CD4-positive, alpha-beta T cell (primary cell): ENCODE measurements at regions of chr10 and their contacts with region 1.

Region 1: DNA sequence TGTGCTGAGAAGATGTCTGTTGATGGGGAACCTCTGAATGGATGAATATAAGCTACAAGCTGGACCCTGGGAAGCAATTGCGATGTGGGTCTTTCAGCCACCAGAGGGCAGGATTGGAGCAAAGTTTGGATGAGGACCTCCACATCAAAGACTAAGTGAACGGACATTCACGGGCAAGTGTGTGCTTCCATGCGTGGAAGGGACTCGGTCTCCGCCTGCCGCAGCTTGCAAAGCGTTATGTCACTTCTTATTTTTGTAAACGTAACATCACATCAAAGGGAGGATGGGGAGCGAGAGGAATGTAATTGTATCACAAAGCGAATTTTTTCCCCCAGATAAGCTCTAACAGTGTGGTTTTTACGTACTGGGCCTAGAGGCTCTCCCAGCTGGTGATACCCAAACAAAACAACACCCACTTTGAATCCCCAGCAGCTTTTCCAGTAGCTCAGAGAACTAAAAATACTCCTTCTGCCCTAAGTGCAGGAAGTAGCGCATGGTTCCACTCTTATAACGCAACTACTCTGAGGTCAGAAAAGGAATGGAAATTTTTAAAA is 65.0 kb downstream of the VWA2 start:
- DNase-seq: peak; percentile 28 to 78 (median 58)
- ATAC-seq: peak; percentile 24
- H3K4me3 ChIP-seq: peak overlapping the region; percentile 78
- H3K4me3 Mint-ChIP-seq: peak overlapping the region; percentile 86
- H3K27ac ChIP-seq: no peak overlapping the region
- H3K27ac Mint-ChIP-seq: peak overlapping the region; percentile 5
- H3K4me1 ChIP-seq: peaks cover 13% of the 10 kb centered on the region
- H3K4me1 Mint-ChIP-seq: peaks cover 12% of the 10 kb centered on the region
- H3K27me3 ChIP-seq: no peaks in the 10 kb centered on the region
- H3K27me3 Mint-ChIP-seq: no peaks in the 10 kb centered on the region
- CTCF ChIP-seq: peak; percentile 81

Region 2: GRCh38 chr10:114703377-114704107 is 399.4 kb after region 1 on chr10:
- CTCF ChIA-PET with region 1: no interaction called
- POLR2A ChIA-PET with region 1: no interaction called
- intact Hi-C with region 1: loop called in 1 of 2 experiments (anchors 2 kb)
- DNase-seq: peak in 7 of 14 experiments; percentile 3 to 53 (median 30)
- ATAC-seq: peak; percentile 80
- H3K4me3 ChIP-seq: no peak overlapping the region
- H3K4me3 Mint-ChIP-seq: no peak overlapping the region
- H3K27ac ChIP-seq: no peak overlapping the region
- H3K27ac Mint-ChIP-seq: no peak overlapping the region
- H3K4me1 ChIP-seq: no peaks in the 10 kb centered on the region
- H3K4me1 Mint-ChIP-seq: no peaks in the 10 kb centered on the region
- H3K27me3 ChIP-seq: no peaks in the 10 kb centered on the region
- H3K27me3 Mint-ChIP-seq: peaks cover 7% of the 10 kb centered on the region
- CTCF ChIP-seq: peak; percentile 67

Region 3: GRCh38 chr10:114879541-114880158 is 575.6 kb after region 1 on chr10:
- CTCF ChIA-PET with region 1: no interaction called
- POLR2A ChIA-PET with region 1: no interaction called
- intact Hi-C with region 1: loop called in 1 of 2 experiments (anchors 10 kb)
- DNase-seq: peak in 13 of 14 experiments; percentile 3 to 59 (median 20)
- ATAC-seq: peak; percentile 51
- H3K4me3 ChIP-seq: no peak overlapping the region
- H3K4me3 Mint-ChIP-seq: no peak overlapping the region
- H3K27ac ChIP-seq: no peak overlapping the region
- H3K27ac Mint-ChIP-seq: no peak overlapping the region
- H3K4me1 ChIP-seq: peaks cover 5% of the 10 kb centered on the region
- H3K4me1 Mint-ChIP-seq: peaks cover 18% of the 10 kb centered on the region
- H3K27me3 ChIP-seq: peaks cover 0 to 16% of the 10 kb centered on the region in 2 experiments
- H3K27me3 Mint-ChIP-seq: peaks cover 53% of the 10 kb centered on the region
- CTCF ChIP-seq: peak; percentile 57

Region 4: DNA sequence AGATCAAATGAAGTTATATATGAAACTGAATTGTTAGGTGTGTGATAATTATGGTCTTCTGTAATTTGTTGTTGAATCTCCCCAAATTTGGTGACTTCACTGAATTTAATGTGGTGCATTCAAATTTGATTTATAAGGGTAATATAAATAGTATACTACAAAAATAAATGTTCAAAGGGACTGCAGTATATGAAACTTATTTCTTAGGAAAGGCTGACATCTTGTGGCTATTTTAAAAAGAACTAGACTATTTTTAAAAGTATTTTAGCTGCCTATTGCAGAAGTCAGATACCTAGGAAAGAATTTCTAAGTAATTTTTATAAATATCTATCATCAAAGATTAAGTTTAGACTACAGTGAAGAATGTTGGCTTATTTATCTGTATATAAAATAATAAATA is 825.7 kb after region 1 on chr10:
- CTCF ChIA-PET with region 1: no interaction called
- POLR2A ChIA-PET with region 1: no interaction called
- intact Hi-C with region 1: loop called (anchors 5 kb)
- DNase-seq: peak in 3 of 14 experiments; percentile 13 to 34 (median 27)
- ATAC-seq: no peak
- H3K4me3 ChIP-seq: no peak overlapping the region
- H3K4me3 Mint-ChIP-seq: no peak overlapping the region
- H3K27ac ChIP-seq: no peak overlapping the region
- H3K27ac Mint-ChIP-seq: no peak overlapping the region
- H3K4me1 ChIP-seq: no peaks in the 10 kb centered on the region
- H3K4me1 Mint-ChIP-seq: no peaks in the 10 kb centered on the region
- H3K27me3 ChIP-seq: no peaks in the 10 kb centered on the region
- H3K27me3 Mint-ChIP-seq: peaks cover 11% of the 10 kb centered on the region
- CTCF ChIP-seq: peak; percentile 27